ENCODE measurements at regions of chr3 and their contacts with region 1.

Region 1: DNA sequence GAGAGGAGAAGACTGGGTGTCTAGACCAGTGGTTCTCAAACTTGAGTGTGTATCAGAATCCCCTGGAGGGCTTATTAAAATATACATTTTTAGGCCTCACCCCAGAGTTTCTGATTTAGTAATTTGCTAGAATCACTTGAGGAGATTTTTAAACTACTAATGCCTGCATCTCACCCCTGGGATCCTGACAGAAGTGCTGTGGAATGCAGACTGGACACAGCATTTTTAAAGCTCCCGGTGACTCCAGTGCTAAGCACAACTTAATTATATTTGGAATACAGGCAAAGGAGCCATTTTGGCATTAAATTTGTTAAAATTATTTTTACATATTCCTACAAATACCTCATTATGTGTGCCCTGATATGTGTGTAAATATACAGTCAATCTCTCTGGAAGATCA is 26.7 kb upstream of the COL6A6 start:
- DNase-seq: no peak
- H3K4me3 ChIP-seq: no peak overlapping the region
- H3K27ac ChIP-seq: no peak overlapping the region
- H3K4me1 ChIP-seq: no peaks in the 10 kb centered on the region
- H3K27me3 ChIP-seq: no peaks in the 10 kb centered on the region
- CTCF ChIP-seq: no peak
- EP300 ChIP-seq: no peak
- POLR2A ChIP-seq: no peak

Region 2: DNA sequence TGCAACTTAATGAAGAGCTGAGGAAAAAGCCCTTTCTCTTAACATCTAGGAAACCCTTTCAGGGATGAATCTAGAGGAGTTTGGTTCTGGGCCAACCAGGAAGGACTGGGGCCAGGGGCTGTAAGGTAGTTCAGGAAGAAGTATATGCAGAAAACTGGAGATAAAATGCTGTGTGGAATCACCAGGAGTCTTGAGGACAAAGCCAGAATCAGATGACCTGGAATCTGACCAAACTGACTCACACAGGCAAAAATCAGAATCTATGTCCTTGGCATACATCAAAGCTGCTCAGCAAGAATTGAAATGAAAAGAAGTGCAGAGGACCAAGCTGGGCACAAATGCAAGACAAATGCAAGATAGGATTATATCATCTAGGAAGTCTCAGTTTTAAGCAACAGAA is 344.2 kb after region 1 on chr3:
- intact Hi-C with region 1: no loop called
- DNase-seq: no peak
- H3K4me3 ChIP-seq: no peak overlapping the region
- H3K27ac ChIP-seq: no peak overlapping the region
- H3K4me1 ChIP-seq: peaks cover 1% of the 10 kb centered on the region
- H3K27me3 ChIP-seq: no peaks in the 10 kb centered on the region
- CTCF ChIP-seq: no peak
- EP300 ChIP-seq: no peak
- POLR2A ChIP-seq: no peak

Region 3: GRCh38 chr3:132380920-132381319 is 1890.7 kb after region 1 on chr3:
- intact Hi-C with region 1: loop called in 1 of 4 experiments (anchors 5 kb)
- DNase-seq: no peak
- H3K4me3 ChIP-seq: no peak overlapping the region
- H3K27ac ChIP-seq: no peak overlapping the region
- H3K4me1 ChIP-seq: no peaks in the 10 kb centered on the region
- H3K27me3 ChIP-seq: no peaks in the 10 kb centered on the region
- CTCF ChIP-seq: no peak
- EP300 ChIP-seq: no peak
- POLR2A ChIP-seq: no peak